GM10248 (cell line): ENCODE measurements at regions of chr1 and their contacts with region 1.

Region 1: DNA sequence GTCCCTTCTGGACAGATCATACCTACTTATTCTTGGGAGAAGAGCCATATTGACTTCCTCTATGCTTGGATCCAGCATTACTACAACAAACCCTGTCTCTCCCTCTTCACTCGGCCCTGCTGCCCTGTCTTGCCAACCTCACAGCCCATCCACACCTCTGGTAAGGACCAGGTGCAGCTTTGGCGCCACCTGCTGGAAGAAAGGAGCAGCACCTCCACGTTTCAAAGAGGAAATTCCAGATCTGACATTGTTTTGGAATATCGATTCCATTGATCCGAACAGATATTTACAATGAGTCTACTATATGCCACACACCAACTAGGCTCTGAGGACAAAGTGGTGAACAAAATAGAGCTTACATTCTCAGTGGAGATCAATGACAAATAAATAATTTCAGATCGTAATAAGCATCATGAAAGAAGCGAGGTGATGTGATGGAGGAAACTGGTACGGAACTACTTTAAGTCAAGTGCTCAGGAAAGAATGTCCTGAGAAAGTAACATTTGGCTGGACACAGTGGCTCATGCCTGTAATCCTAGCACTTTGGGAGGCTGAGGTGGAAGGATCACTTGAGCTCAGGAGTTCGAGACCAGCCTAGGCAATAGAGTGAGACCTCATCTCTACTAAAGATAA is 18.7 kb downstream of the MFSD2A start:
- DNase-seq: peak; percentile 83
- CTCF ChIP-seq: peak; percentile 92

Region 2: GRCh38 chr1:39816415-39817090 is 157.1 kb before region 1 on chr1:
- CTCF ChIA-PET with region 1: interaction called, 83 read pairs
- POLR2A ChIA-PET with region 1: no interaction called
- DNase-seq: peak; percentile 79
- CTCF ChIP-seq: peak; percentile 67

Region 3: GRCh38 chr1:39866767-39867166 is 106.9 kb before region 1 on chr1:
- CTCF ChIA-PET with region 1: no interaction called
- POLR2A ChIA-PET with region 1: no interaction called
- DNase-seq: no peak
- CTCF ChIP-seq: no peak

Region 4: GRCh38 chr1:39901698-39902459 is 71.7 kb before region 1 on chr1 and contains the start of gene MYCL:
- CTCF ChIA-PET with region 1: interaction called, 25 read pairs
- POLR2A ChIA-PET with region 1: no interaction called
- DNase-seq: peak; percentile 87
- CTCF ChIP-seq: peak; percentile 69

Region 5: DNA sequence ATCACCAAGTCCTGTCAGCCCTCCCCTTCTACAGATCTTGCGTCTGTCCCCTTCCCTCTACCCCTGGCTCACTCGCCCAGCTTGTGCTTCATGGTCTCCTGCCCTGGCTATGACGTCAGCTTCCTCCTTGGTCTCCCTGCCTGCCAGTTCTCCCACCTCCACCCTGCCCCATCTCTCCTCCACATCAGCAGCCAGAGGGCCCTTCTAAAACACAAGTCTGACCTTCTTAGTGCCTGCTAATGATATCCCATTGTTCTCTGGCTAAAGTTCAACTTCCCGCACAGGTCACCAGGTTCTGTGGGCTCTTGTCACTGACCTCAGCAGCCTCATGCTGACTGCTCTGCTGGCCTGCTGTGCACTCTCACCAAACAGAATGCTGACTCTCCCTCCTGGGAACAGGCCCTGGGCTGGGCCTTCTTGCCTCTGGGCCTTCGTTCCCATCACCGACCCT is 47.3 kb before region 1 on chr1:
- CTCF ChIA-PET with region 1: interaction called, 159 read pairs
- POLR2A ChIA-PET with region 1: no interaction called
- DNase-seq: no peak
- CTCF ChIP-seq: no peak

Region 6: DNA sequence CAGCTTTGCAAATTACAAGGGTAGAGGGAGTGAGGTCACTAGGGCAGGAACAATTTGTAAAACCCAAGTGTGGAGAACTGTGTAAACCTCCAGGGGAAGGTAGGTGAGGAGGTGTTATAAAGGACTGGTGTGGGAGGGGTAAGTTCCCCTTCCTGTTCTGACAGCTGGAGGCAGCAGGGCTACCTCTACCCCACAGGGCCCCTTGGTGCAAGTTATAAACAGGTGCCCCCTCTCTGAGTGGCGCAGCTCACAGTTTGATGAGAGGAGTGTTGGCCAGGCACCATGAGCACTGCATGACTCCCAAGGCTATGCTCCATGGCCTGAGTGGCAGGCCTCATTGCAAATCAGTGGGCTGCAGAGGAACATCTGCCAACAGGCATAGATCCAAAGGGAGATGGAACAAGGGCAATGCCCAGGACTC is 22.4 kb after region 1 on chr1:
- CTCF ChIA-PET with region 1: interaction called, 13 read pairs
- POLR2A ChIA-PET with region 1: no interaction called
- DNase-seq: peak; percentile 79
- CTCF ChIP-seq: no peak

Region 7: DNA sequence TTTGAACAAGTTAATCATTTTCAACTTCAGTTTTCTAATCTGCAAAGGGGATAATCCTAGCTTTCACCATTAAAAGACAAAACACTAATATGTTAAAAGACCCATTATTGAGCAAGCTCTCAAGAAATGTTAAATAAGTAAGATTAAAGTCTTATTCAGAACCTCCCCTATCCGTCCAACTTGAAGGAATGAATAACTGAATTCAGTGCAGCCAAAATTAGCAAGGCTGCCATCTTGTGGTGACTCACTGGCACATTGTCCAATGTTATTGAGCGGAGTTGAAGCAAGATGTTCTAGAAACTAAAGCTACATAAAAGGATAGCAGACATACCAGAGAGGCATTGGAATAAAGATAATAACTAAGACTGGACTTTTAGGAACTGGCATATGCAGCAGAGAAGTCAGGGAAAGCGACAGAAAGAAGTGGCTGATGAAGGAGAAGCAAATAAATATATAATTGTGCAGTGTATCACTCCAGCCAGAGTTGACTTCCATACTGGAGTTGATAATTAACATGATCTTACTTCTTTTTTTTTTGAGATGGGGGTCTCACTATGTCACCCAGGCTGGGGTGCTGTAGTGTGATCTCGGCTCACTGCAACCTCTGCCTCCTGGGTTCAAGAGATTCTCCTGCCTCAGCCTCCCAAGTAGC is 58.7 kb after region 1 on chr1:
- CTCF ChIA-PET with region 1: interaction called, 45 read pairs
- POLR2A ChIA-PET with region 1: no interaction called
- DNase-seq: peak; percentile 57
- CTCF ChIP-seq: peak; percentile 81

Region 8: DNA sequence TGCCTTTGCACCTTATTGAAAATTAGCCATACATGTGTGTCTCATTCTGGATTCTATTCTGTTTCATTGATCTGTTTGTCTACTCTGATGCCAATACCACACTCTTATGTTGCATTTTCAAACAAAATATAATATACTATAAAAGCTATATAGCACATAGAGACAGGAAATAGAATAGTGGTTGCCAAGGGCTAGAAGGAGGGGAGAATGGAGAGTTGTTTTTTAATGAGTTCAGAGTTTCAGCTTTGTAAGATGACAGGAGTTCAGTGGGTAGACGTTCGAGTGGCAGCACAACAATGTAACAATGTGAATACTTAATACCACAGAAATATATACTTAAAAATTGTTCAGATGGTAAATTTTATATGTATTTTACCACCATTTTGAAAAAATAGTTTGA is 204.6 kb after region 1 on chr1:
- CTCF ChIA-PET with region 1: no interaction called
- POLR2A ChIA-PET with region 1: no interaction called
- DNase-seq: no peak
- CTCF ChIP-seq: no peak